Transverse colon (tissue), 4 donors: ENCODE measurements at regions of chr4 and their contacts with region 1.

Region 1: GRCh38 chr4:140059159-140059558 is 94.8 kb downstream of the MAML3 start:
- DNase-seq: no peak
- H3K4me3 ChIP-seq: no peak overlapping the region
- H3K27ac ChIP-seq: no peak overlapping the region
- H3K4me1 ChIP-seq: peaks cover 0 to 26% (median 0%) of the 10 kb centered on the region in 4 donors
- H3K27me3 ChIP-seq: no peaks in the 10 kb centered on the region
- CTCF ChIP-seq: no peak
- EP300 ChIP-seq: no peak
- POLR2A ChIP-seq: no peak

Region 2: GRCh38 chr4:140037357-140038030 is 21.7 kb before region 1 on chr4:
- in situ Hi-C with region 1: no loop called
- intact Hi-C with region 1: loop called (anchors 2 kb)
- DNase-seq: no peak
- H3K4me3 ChIP-seq: no peak overlapping the region
- H3K27ac ChIP-seq: no peak overlapping the region
- H3K4me1 ChIP-seq: peaks cover 0 to 11% (median 3%) of the 10 kb centered on the region in 4 donors
- H3K27me3 ChIP-seq: no peaks in the 10 kb centered on the region
- CTCF ChIP-seq: no peak
- EP300 ChIP-seq: no peak
- POLR2A ChIP-seq: no peak

Region 3: GRCh38 chr4:140092094-140092849 is 33.1 kb after region 1 on chr4:
- in situ Hi-C with region 1: no loop called
- intact Hi-C with region 1: no loop called
- DNase-seq: peak; percentile 61
- H3K4me3 ChIP-seq: peak overlapping the region in 3 of 4 donors; percentile 21 to 29 (median 21)
- H3K27ac ChIP-seq: peak overlapping the region; percentile 63 to 73 (median 68)
- H3K4me1 ChIP-seq: peaks cover 0 to 37% (median 15%) of the 10 kb centered on the region in 4 donors
- H3K27me3 ChIP-seq: no peaks in the 10 kb centered on the region
- CTCF ChIP-seq: no peak
- EP300 ChIP-seq: no peak
- POLR2A ChIP-seq: no peak

Region 4: GRCh38 chr4:140637836-140638235 is 578.7 kb after region 1 on chr4:
- in situ Hi-C with region 1: no loop called
- intact Hi-C with region 1: no loop called
- DNase-seq: peak; percentile 35
- H3K4me3 ChIP-seq: no peak overlapping the region
- H3K27ac ChIP-seq: no peak overlapping the region
- H3K4me1 ChIP-seq: peaks cover 0 to 9% (median 3%) of the 10 kb centered on the region in 4 donors
- H3K27me3 ChIP-seq: no peaks in the 10 kb centered on the region
- CTCF ChIP-seq: peak; percentile 37 to 63 (median 49)
- EP300 ChIP-seq: no peak
- POLR2A ChIP-seq: no peak

Region 5: DNA sequence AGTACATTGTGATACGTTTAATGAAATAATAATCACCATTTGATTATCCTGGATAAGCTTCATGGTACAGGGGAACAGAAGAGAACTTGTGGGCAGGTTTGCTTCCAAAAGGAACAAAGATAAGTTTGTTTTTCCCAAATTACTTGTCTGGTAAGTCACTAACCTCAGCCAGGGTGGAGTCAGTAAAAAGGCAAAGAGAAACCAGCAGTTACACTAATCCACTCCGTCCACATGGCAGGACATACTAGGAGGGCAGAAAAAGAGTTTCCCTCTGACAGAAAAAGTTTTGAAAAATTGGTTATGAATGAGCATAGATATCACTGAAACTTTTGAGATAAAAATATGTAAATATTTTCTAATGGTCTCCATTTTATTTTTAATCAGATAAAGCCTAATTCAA is 1863.1 kb after region 1 on chr4:
- in situ Hi-C with region 1: no loop called
- intact Hi-C with region 1: no loop called
- DNase-seq: no peak
- H3K4me3 ChIP-seq: no peak overlapping the region
- H3K27ac ChIP-seq: no peak overlapping the region
- H3K4me1 ChIP-seq: no peaks in the 10 kb centered on the region
- H3K27me3 ChIP-seq: no peaks in the 10 kb centered on the region
- CTCF ChIP-seq: no peak
- EP300 ChIP-seq: no peak
- POLR2A ChIP-seq: no peak